CD4-positive, alpha-beta memory T cell (primary cell): ENCODE measurements at regions of chr12 and their contacts with region 1.

Region 1: GRCh38 chr12:98424726-98425401 is 90.5 kb upstream of the TMPO start:
- DNase-seq: peak in 4 of 5 donors; percentile 35 to 46 (median 40)
- H3K4me3 ChIP-seq: no peak overlapping the region
- H3K4me3 Mint-ChIP-seq: no peak overlapping the region
- H3K27ac ChIP-seq: no peak overlapping the region
- H3K27ac Mint-ChIP-seq: no peak overlapping the region
- H3K4me1 ChIP-seq: no peaks in the 10 kb centered on the region
- H3K4me1 Mint-ChIP-seq: peaks cover 0 to 3% (median 0%) of the 10 kb centered on the region in 4 donors
- H3K27me3 ChIP-seq: no peaks in the 10 kb centered on the region
- H3K27me3 Mint-ChIP-seq: peaks cover 3% of the 10 kb centered on the region in 2 donors

Region 2: DNA sequence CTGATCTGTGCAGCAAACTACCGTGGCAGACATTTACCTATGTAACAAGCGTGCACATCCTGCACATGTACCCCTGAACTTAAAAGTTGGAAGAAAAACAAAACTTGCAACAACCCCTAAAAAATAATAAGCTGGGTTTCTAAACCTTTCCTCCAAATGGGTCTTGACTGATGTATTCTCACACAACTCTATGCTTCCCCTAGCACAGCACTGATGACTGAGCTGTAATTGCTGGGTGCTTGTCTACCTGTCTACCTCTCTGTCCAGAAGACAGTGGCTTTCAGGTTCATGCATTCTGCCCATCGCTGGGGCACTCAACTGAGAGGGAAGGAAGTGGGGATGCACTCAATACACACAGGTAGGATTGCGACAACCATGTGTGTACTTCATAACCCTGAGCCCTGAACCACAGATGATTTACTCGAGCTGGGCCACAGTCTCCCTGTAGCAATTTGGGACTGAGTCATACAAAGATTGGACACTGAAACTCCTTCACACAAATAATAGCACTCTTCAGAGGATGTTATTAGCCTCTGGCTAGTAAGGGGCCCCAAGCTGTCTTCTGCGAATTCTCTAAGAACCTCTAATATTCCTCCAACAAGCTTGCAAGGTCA is 45.7 kb after region 1 on chr12:
- CTCF ChIA-PET with region 1: no interaction called
- POLR2A ChIA-PET with region 1: no interaction called
- intact Hi-C with region 1: no loop called
- DNase-seq: no peak
- H3K4me3 ChIP-seq: no peak overlapping the region
- H3K4me3 Mint-ChIP-seq: no peak overlapping the region
- H3K27ac ChIP-seq: no peak overlapping the region
- H3K27ac Mint-ChIP-seq: no peak overlapping the region
- H3K4me1 ChIP-seq: no peaks in the 10 kb centered on the region
- H3K4me1 Mint-ChIP-seq: no peaks in the 10 kb centered on the region
- H3K27me3 ChIP-seq: no peaks in the 10 kb centered on the region
- H3K27me3 Mint-ChIP-seq: peaks cover 0 to 2% of the 10 kb centered on the region in 2 donors

Region 3: GRCh38 chr12:98532681-98533304 is 107.9 kb after region 1 on chr12:
- CTCF ChIA-PET with region 1: interaction called, 6 read pairs
- POLR2A ChIA-PET with region 1: no interaction called
- intact Hi-C with region 1: loop called (anchors 2 kb)
- DNase-seq: peak in 4 of 5 donors; percentile 41 to 50 (median 48)
- H3K4me3 ChIP-seq: no peak overlapping the region
- H3K4me3 Mint-ChIP-seq: no peak overlapping the region
- H3K27ac ChIP-seq: no peak overlapping the region
- H3K27ac Mint-ChIP-seq: peak overlapping the region in 6 of 7 donors; percentile 32 to 48 (median 42)
- H3K4me1 ChIP-seq: peaks cover under 1% of the 10 kb centered on the region
- H3K4me1 Mint-ChIP-seq: peaks cover 5 to 28% (median 12%) of the 10 kb centered on the region in 4 donors
- H3K27me3 ChIP-seq: no peaks in the 10 kb centered on the region
- H3K27me3 Mint-ChIP-seq: no peaks in the 10 kb centered on the region

Region 4: GRCh38 chr12:98653866-98654493 is 229.1 kb after region 1 on chr12:
- CTCF ChIA-PET with region 1: interaction called, 3 read pairs
- POLR2A ChIA-PET with region 1: no interaction called
- intact Hi-C with region 1: loop called (anchors 1 kb)
- DNase-seq: peak in 4 of 5 donors; percentile 48 to 61 (median 56)
- H3K4me3 ChIP-seq: no peak overlapping the region
- H3K4me3 Mint-ChIP-seq: no peak overlapping the region
- H3K27ac ChIP-seq: no peak overlapping the region
- H3K27ac Mint-ChIP-seq: no peak overlapping the region
- H3K4me1 ChIP-seq: peaks cover 7% of the 10 kb centered on the region
- H3K4me1 Mint-ChIP-seq: peaks cover 12 to 22% (median 15%) of the 10 kb centered on the region in 4 donors
- H3K27me3 ChIP-seq: no peaks in the 10 kb centered on the region
- H3K27me3 Mint-ChIP-seq: no peaks in the 10 kb centered on the region